A673 (cell line): ENCODE measurements at regions of chr12 and their contacts with region 1.

Region 1: DNA sequence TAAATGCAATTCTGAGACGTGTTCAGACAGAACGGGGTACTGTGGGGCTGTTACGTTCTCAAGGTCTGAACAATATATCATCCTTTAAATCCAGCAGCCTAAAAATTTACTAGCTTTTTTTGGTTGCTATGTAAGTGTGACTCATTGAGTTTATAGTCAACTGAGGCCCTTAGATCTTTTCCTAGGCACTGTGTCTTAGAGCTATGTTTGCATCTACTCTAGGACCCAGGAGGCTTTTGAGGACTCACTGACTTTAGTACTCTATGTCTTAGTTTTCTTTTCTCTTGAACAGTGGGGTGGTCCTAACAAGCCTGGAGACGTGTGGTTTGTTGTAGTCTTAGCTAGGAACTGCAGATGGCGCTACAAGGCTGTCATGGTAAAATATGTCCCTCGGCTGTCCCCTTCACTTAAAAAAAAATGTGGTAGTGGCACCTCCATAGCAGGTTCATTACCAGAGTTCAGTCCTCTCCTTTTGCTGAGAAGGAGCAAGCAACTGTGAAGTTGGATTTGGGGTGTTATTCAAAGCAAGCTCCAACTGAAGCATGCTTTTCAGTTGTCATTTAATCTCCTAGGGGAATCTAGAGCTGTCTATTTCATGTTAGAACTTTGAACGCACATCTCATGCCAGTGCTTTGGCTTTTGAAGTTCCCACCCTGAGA is 8.7 kb upstream of the SPATS2 start:
- DNase-seq: peak; percentile 89
- H3K4me3 ChIP-seq: peak overlapping the region; percentile 5
- H3K27ac ChIP-seq: no peak overlapping the region
- H3K4me1 ChIP-seq: peaks cover 5% of the 10 kb centered on the region
- H3K27me3 ChIP-seq: no peaks in the 10 kb centered on the region
- CTCF ChIP-seq: peak; percentile 89

Region 2: DNA sequence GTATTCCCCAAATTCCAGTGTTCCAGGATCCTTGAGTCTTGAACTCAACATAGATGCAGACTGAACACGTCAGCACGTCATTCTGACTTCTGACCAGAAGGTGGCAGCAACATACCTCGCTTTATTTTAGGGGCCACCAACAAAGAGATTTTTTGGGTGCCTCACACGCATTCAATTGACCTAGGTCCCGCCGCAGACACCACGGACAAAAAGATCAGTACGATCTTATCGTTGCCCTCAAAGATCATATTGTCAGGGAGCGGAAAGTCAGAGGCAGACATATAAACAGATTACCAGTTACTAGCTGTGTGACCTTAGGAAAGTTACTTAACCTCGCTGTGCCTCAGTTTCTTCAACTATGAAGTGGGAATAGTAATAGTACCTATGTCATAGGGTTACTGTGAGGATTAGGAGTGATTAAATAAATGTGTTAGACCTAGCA is 70.2 kb before region 1 on chr12:
- CTCF ChIA-PET with region 1: interaction called, 7 read pairs
- POLR2A ChIA-PET with region 1: no interaction called
- intact Hi-C with region 1: loop called (anchors 2 kb)
- DNase-seq: peak; percentile 68
- H3K4me3 ChIP-seq: no peak overlapping the region
- H3K27ac ChIP-seq: no peak overlapping the region
- H3K4me1 ChIP-seq: peaks cover 7% of the 10 kb centered on the region
- H3K27me3 ChIP-seq: no peaks in the 10 kb centered on the region
- CTCF ChIP-seq: peak; percentile 93

Region 3: GRCh38 chr12:49314811-49315210 is 43.8 kb before region 1 on chr12:
- CTCF ChIA-PET with region 1: no interaction called
- POLR2A ChIA-PET with region 1: no interaction called
- intact Hi-C with region 1: no loop called
- DNase-seq: no peak
- H3K4me3 ChIP-seq: no peak overlapping the region
- H3K27ac ChIP-seq: no peak overlapping the region
- H3K4me1 ChIP-seq: no peaks in the 10 kb centered on the region
- H3K27me3 ChIP-seq: no peaks in the 10 kb centered on the region
- CTCF ChIP-seq: no peak

Region 4: GRCh38 chr12:49336645-49337584 is 21.7 kb before region 1 on chr12 and contains the start of gene C1QL4:
- CTCF ChIA-PET with region 1: interaction called, 13 read pairs
- POLR2A ChIA-PET with region 1: no interaction called
- intact Hi-C with region 1: no loop called
- DNase-seq: peak; percentile 90
- H3K4me3 ChIP-seq: peak within 1 kb of the TSS; percentile 56
- H3K27ac ChIP-seq: no peak within 1 kb of the TSS
- H3K4me1 ChIP-seq: peaks cover 11% of the 10 kb centered on the region
- H3K27me3 ChIP-seq: no peaks in the 10 kb centered on the region
- CTCF ChIP-seq: peak; percentile 97
- total RNA-seq, gene C1QL4: 0.41 and 1.0 TPM in 2 replicates

Region 5: GRCh38 chr12:49422114-49422513 is 63.5 kb after region 1 on chr12:
- CTCF ChIA-PET with region 1: no interaction called
- POLR2A ChIA-PET with region 1: no interaction called
- intact Hi-C with region 1: no loop called
- DNase-seq: no peak
- H3K4me3 ChIP-seq: no peak overlapping the region
- H3K27ac ChIP-seq: no peak overlapping the region
- H3K4me1 ChIP-seq: peaks cover 14% of the 10 kb centered on the region
- H3K27me3 ChIP-seq: no peaks in the 10 kb centered on the region
- CTCF ChIP-seq: no peak

Region 6: DNA sequence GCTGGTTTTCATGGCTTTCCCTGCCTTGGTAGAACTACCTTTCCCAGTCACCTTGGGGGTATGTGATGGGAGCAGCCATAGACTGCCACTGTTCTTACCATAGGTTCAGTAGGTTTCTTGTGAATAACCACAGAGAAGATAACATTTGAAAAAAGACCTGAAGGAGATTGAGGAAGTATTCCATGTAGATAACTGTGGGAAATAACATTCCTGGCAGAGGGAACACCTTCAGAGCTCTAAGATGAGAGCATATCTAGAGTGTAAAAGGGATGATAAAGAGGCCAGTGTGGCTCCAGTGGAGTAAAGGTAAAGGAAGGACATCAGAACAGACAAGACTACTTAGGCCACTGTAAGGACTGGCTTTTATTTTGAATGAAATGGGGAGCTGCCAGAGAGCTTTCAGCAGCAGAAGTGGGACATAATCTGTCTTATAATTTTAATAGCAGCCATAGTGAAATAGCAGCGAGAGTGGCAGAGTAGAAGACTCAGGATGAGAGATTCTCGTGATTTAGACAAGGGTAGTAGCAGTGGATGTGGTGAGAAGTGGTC is 97.6 kb after region 1 on chr12:
- CTCF ChIA-PET with region 1: no interaction called
- POLR2A ChIA-PET with region 1: no interaction called
- intact Hi-C with region 1: no loop called
- DNase-seq: no peak
- H3K4me3 ChIP-seq: no peak overlapping the region
- H3K27ac ChIP-seq: peak overlapping the region; percentile 11
- H3K4me1 ChIP-seq: no peaks in the 10 kb centered on the region
- H3K27me3 ChIP-seq: no peaks in the 10 kb centered on the region
- CTCF ChIP-seq: no peak

Region 7: DNA sequence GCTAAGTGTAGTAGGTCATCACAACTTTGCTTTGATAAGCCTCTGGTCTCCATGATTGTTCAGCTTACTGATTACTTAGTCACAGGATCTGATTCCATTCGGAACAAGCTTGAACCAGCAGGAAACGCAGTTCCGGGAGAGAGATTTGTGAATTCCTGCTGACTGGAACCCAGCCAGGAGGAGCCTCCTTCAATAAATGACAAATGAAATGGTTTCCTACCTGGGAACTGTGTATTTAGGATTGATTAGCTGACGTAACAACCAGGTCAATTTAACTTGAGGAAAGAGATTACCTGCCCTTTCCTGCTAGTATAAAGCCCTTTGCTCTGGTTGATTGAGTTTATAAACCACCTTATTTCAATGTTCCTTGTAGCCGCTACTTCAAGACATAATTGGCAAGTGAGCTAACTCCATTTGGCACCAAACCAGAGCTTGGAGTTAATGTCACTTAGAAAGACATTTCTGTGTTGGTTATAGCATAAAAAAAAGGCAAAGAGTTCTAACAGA is 145.1 kb after region 1 on chr12:
- CTCF ChIA-PET with region 1: interaction called, 14 read pairs
- POLR2A ChIA-PET with region 1: no interaction called
- intact Hi-C with region 1: no loop called
- DNase-seq: peak; percentile 92
- H3K4me3 ChIP-seq: peak overlapping the region; percentile 10
- H3K27ac ChIP-seq: peak overlapping the region; percentile 64
- H3K4me1 ChIP-seq: peaks cover 20% of the 10 kb centered on the region
- H3K27me3 ChIP-seq: no peaks in the 10 kb centered on the region
- CTCF ChIP-seq: no peak

Region 8: DNA sequence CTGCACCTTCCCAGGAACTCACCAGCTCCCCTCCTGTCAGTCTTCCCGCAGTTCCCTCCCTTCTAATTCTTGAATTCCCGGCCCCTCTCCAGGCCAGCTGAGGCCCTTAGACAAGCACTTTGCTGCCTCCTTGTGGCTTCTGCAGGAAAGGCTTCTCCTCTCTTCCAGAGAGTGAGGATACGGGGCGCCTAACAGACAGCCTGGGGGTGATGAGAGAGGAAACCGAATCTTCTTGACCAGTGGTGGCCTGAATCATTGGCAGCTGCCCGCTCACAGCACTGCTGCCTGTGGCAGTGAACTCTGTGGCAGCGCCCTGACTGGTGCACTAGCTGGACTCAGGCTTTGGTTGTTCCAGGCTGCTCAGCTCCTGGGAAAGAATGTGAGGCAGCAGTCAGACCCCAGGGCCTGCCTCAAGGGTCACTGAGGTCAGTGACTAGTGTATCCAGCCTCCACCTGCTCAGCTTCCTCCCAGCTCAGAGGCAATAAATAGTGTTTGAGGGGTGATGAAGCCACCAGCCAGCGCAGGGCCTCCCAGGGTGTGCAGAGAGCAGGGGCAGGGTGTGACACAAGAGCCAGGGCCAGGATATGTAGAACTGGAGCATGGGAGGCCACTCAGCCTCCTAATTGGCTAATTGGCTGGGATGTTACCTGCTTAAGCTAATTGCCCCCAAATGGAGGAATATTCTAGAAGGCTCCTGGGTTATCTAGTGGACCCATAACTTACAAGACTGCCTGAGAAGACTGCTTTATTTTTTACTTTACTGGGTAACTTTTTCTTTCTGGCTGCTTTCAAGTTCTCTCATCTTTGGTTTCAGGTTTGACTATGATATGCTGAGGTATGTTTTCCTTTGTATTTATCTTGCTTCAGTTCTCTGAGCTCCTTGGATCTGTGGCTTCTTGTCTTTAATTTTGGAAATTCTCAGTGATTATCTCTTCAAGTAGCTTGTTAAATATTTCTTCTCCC is 222.2 kb after region 1 on chr12:
- CTCF ChIA-PET with region 1: interaction called, 33 read pairs
- POLR2A ChIA-PET with region 1: no interaction called
- intact Hi-C with region 1: loop called (anchors 5 kb)
- DNase-seq: peak; percentile 84
- H3K4me3 ChIP-seq: no peak overlapping the region
- H3K27ac ChIP-seq: no peak overlapping the region
- H3K4me1 ChIP-seq: no peaks in the 10 kb centered on the region
- H3K27me3 ChIP-seq: no peaks in the 10 kb centered on the region
- CTCF ChIP-seq: peak; percentile 92